ENCODE measurements at regions of chr7 and their contacts with region 1.

Region 1: GRCh38 chr7:155598810-155599210 is 45.7 kb upstream of the RBM33 start:
- DNase-seq: peak; percentile 21
- ATAC-seq: peak; percentile 95
- H3K4me3 ChIP-seq: no peak overlapping the region
- H3K27ac ChIP-seq: no peak overlapping the region
- H3K4me1 ChIP-seq: no peaks in the 10 kb centered on the region
- H3K27me3 ChIP-seq: no peaks in the 10 kb centered on the region
- CTCF ChIP-seq: peak; percentile 93 to 96 (median 95); a peak in 5 of 6 replicates
- EP300 ChIP-seq: no peak
- POLR2A ChIP-seq: no peak
- RAD21 ChIP-seq: peak; percentile 90

Region 2: DNA sequence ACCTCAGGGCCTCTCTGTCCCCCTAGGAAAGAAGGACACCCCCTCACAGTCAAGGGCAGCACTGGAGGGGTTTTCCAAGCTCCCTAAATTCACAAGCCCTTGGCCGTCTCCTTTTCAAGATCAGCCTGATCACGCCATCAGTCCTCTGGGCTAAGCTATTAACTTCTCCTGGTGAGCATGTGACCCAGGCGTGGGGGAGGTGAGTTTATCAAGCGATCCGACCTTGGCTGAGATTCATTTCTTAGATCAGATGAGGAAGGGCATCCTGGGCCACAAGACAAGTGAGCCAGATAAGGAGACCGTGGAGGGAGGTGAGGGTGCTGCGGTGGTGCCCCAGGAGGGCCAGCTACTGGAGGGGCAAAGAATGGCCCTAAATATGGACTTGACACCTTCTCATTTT is 160.0 kb before region 1 on chr7:
- CTCF ChIA-PET with region 1: no interaction called
- POLR2A ChIA-PET with region 1: no interaction called
- RAD21 ChIA-PET with region 1: no interaction called
- SMC1A ChIA-PET with region 1: no interaction called
- in situ Hi-C with region 1: no loop called
- intact Hi-C with region 1: no loop called
- DNase-seq: no peak
- ATAC-seq: no peak
- H3K4me3 ChIP-seq: no peak overlapping the region
- H3K27ac ChIP-seq: no peak overlapping the region
- H3K4me1 ChIP-seq: no peaks in the 10 kb centered on the region
- H3K27me3 ChIP-seq: no peaks in the 10 kb centered on the region; a peak in 3 of 4 replicates
- CTCF ChIP-seq: no peak
- EP300 ChIP-seq: no peak
- POLR2A ChIP-seq: no peak
- RAD21 ChIP-seq: no peak

Region 3: GRCh38 chr7:155584763-155585531 is 13.9 kb before region 1 on chr7:
- CTCF ChIA-PET with region 1: interaction called, 12 read pairs
- POLR2A ChIA-PET with region 1: no interaction called
- RAD21 ChIA-PET with region 1: no interaction called
- SMC1A ChIA-PET with region 1: interaction called, 4 read pairs
- in situ Hi-C with region 1: no loop called
- intact Hi-C with region 1: no loop called
- DNase-seq: no peak
- ATAC-seq: no peak
- H3K4me3 ChIP-seq: no peak overlapping the region
- H3K27ac ChIP-seq: no peak overlapping the region
- H3K4me1 ChIP-seq: no peaks in the 10 kb centered on the region
- H3K27me3 ChIP-seq: no peaks in the 10 kb centered on the region; a peak in 2 of 4 replicates
- CTCF ChIP-seq: no peak
- EP300 ChIP-seq: no peak
- POLR2A ChIP-seq: no peak
- RAD21 ChIP-seq: no peak

Region 4: GRCh38 chr7:155681663-155682062 is 82.9 kb after region 1 on chr7:
- CTCF ChIA-PET with region 1: interaction called, 11 read pairs
- POLR2A ChIA-PET with region 1: no interaction called
- RAD21 ChIA-PET with region 1: interaction called, 10 read pairs
- SMC1A ChIA-PET with region 1: interaction called, 6 read pairs
- in situ Hi-C with region 1: no loop called
- intact Hi-C with region 1: no loop called
- DNase-seq: no peak
- ATAC-seq: peak; percentile 17
- H3K4me3 ChIP-seq: no peak overlapping the region
- H3K27ac ChIP-seq: no peak overlapping the region
- H3K4me1 ChIP-seq: peaks cover 13% of the 10 kb centered on the region
- H3K27me3 ChIP-seq: no peaks in the 10 kb centered on the region
- CTCF ChIP-seq: no peak
- EP300 ChIP-seq: no peak
- POLR2A ChIP-seq: no peak
- RAD21 ChIP-seq: no peak

Region 5: DNA sequence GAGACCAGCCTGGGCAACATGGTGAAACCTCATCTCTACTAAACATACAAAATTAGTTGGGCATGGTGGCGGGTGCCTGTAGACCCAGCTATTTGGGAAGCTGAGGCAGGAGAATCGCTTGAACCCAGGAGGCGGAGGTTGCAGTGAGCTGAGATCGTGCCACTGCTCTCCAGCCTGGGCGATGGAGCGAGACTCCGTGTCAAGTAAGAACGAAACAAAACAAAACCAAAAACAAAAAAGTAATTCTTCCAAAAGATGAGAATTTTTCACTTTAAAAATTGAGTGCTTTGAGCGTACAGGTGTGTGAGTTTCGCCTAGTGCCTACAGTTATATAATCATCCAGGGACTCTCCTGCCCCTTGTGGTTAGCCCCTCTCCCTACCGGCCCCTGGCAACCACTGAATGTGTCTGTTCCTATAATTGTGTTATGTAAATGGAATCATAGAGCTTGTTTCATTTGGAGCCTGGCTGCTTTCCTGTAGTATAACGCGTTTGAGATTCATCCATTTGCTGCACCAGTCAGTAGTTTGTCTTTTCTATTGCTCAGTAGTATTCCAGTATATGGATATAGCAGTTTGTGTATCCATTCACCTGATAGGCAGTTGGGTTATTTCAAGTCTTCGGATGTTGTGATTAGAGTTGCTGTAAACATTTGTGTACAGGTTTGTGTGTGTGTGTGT is 125.7 kb after region 1 on chr7:
- CTCF ChIA-PET with region 1: interaction called, 192 read pairs
- POLR2A ChIA-PET with region 1: no interaction called
- RAD21 ChIA-PET with region 1: interaction called, 18 read pairs
- SMC1A ChIA-PET with region 1: interaction called, 11 read pairs
- in situ Hi-C with region 1: loop called (anchors 5 kb)
- intact Hi-C with region 1: no loop called
- DNase-seq: no peak
- ATAC-seq: peak; percentile 78
- H3K4me3 ChIP-seq: peak overlapping the region; percentile 62
- H3K27ac ChIP-seq: peak overlapping the region; percentile 87
- H3K4me1 ChIP-seq: peaks cover 39% of the 10 kb centered on the region
- H3K27me3 ChIP-seq: no peaks in the 10 kb centered on the region
- CTCF ChIP-seq: peak; percentile 16 to 27 (median 23); a peak in 2 of 6 replicates
- EP300 ChIP-seq: no peak
- POLR2A ChIP-seq: no peak
- RAD21 ChIP-seq: no peak

Region 6: GRCh38 chr7:155746188-155746587 is 147.4 kb after region 1 on chr7:
- CTCF ChIA-PET with region 1: interaction called, 192 read pairs
- POLR2A ChIA-PET with region 1: interaction called, 3 read pairs
- RAD21 ChIA-PET with region 1: interaction called, 9 read pairs
- SMC1A ChIA-PET with region 1: interaction called, 48 read pairs
- in situ Hi-C with region 1: no loop called
- intact Hi-C with region 1: no loop called
- DNase-seq: no peak
- ATAC-seq: peak; percentile 78
- H3K4me3 ChIP-seq: no peak overlapping the region; the same call in 1 of the 2 replicates
- H3K27ac ChIP-seq: peak overlapping the region; percentile 65
- H3K4me1 ChIP-seq: peaks cover 43% of the 10 kb centered on the region
- H3K27me3 ChIP-seq: no peaks in the 10 kb centered on the region
- CTCF ChIP-seq: no peak
- EP300 ChIP-seq: 0 out of 4 replicates have a peak, but pooled peaks of 1 of the 2 experiments have one; percentile 20
- POLR2A ChIP-seq: no peak
- RAD21 ChIP-seq: no peak

Region 7: DNA sequence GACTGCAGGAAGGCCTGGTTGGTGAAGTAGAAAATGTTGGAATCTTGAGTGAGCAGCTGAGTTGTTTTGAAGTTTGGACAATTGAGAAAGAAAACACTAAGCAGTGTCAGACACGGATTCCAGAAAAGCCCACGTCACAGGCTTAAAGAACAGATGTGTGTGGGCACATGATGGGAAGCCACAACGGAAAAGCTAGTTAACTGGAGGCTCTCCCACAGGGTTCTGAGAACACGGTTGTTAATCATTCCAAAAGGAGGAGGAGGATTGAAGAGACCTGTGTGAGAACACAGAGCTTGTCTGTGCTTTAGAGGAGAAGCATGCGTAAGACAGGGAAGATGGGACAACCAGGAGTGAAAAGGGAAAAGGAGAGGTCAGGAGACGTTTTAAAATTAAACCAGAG is 170.9 kb after region 1 on chr7:
- CTCF ChIA-PET with region 1: interaction called, 170 read pairs
- POLR2A ChIA-PET with region 1: no interaction called
- RAD21 ChIA-PET with region 1: interaction called, 47 read pairs
- SMC1A ChIA-PET with region 1: interaction called, 58 read pairs
- in situ Hi-C with region 1: no loop called
- intact Hi-C with region 1: loop called (anchors 1 kb)
- DNase-seq: no peak
- ATAC-seq: no peak
- H3K4me3 ChIP-seq: no peak overlapping the region
- H3K27ac ChIP-seq: no peak overlapping the region
- H3K4me1 ChIP-seq: peaks cover 4% of the 10 kb centered on the region; the same call in 1 of the 2 replicates
- H3K27me3 ChIP-seq: no peaks in the 10 kb centered on the region
- CTCF ChIP-seq: no peak
- EP300 ChIP-seq: no peak
- POLR2A ChIP-seq: no peak
- RAD21 ChIP-seq: no peak